ENCODE measurements at regions of chr5 and their contacts with region 1.

Region 1: DNA sequence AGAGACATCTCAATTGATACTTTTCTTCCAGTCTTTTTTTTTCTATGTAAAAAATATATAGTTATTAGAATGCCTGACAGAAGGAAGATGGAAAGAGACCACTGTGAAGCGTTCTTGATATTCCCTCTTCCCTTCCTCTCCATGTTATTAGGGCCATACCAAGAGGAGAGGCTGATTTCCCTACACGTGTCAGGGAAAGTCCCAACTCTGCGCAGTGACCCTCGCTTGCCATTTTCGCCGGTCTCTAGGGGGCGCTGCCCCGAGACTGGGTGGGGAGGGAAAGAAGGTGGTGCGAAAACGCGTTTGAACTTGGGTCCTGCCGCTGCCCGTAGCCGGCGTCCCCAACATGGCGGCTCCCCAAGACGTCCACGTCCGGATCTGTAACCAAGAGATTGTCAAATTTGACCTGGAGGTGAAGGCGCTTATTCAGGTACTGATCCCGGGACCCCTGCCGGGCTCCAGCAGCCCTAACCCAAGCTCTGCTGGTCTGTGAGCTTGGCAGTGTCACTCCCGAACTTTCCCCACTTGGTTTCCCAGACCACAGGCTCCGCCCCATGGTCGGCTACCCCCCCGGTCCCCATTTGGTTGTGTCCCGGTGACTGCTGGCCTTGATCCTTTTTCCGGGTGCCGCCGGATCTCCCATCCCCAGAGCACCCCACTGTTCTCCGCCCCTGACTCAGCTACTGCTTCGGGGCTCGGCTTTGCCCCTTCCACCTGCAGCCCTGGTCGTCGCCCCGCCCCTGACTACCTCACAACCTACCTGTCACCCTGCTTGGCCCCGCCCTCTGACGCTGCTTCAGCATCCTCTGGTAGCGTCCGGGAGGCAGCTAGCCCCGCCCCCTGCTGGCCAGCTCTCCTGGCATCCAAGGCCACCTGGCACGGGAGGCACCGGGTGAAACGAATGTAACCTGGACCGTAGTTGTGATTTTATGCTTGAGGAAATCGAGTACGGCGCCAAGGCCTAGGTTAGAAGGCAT is at the start of gene BNIP1:
- DNase-seq: peak; percentile 95
- H3K4me3 ChIP-seq: peak within 1 kb of the TSS; percentile 77 to 97 (median 89)
- H3K27ac ChIP-seq: peak within 1 kb of the TSS; percentile 89
- H3K4me1 ChIP-seq: peaks cover 4% of the 10 kb centered on the region
- H3K27me3 ChIP-seq: no peaks in the 10 kb centered on the region
- CTCF ChIP-seq: peak; percentile 98
- POLR2A ChIP-seq: peak; percentile 73
- total RNA-seq, gene BNIP1: 15.7 and 19.7 TPM in 2 replicates

Region 2: GRCh38 chr5:172920447-172920849 is 224.0 kb before region 1 on chr5:
- CTCF ChIA-PET with region 1: no interaction called
- POLR2A ChIA-PET with region 1: no interaction called
- dilution Hi-C with region 1: no loop called
- intact Hi-C with region 1: no loop called
- DNase-seq: no peak
- H3K4me3 ChIP-seq: no peak overlapping the region
- H3K27ac ChIP-seq: no peak overlapping the region
- H3K4me1 ChIP-seq: no peaks in the 10 kb centered on the region
- H3K27me3 ChIP-seq: no peaks in the 10 kb centered on the region
- CTCF ChIP-seq: no peak
- POLR2A ChIP-seq: no peak

Region 3: GRCh38 chr5:173010547-173011464 is 133.7 kb before region 1 on chr5:
- CTCF ChIA-PET with region 1: interaction called, 19 read pairs
- POLR2A ChIA-PET with region 1: interaction called, 3 read pairs
- dilution Hi-C with region 1: no loop called
- intact Hi-C with region 1: loop called (anchors 1 kb)
- DNase-seq: peak; percentile 75
- H3K4me3 ChIP-seq: no peak overlapping the region
- H3K27ac ChIP-seq: no peak overlapping the region
- H3K4me1 ChIP-seq: peaks cover 2% of the 10 kb centered on the region
- H3K27me3 ChIP-seq: no peaks in the 10 kb centered on the region
- CTCF ChIP-seq: peak; percentile 41 to 52
- POLR2A ChIP-seq: no peak

Region 4: DNA sequence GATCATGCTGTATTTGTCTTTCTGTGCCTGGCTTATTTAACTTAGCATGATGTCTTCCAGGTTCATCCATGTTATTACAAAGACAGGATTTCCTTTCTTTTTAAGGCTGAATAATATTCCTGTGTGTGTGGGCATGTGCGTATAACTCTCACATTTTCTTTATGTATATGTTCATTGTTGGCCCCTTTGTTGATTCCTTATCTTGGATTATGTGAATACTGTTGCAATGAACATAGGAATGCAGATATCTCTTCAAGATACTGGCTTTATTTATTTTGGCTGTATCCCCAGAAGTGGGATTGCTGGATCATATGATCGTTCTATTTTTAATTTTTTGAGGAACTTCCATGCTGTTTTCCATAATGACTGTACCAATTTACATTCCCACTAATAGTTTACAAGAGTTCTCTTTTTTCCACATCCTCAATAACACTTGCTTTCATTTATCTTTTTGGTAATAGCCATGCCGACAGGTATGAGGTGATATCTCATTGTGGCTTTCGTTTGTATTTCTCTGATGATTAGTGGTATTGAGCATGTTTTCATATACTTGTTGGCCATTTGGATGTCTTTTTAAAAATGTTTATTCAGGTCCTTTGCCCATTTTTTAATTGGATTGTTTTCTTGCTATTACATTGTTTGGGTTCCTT is 50.4 kb before region 1 on chr5:
- CTCF ChIA-PET with region 1: interaction called, 3 read pairs
- POLR2A ChIA-PET with region 1: no interaction called
- dilution Hi-C with region 1: no loop called
- intact Hi-C with region 1: loop called (anchors 1 kb)
- DNase-seq: peak; percentile 97
- H3K4me3 ChIP-seq: no peak overlapping the region
- H3K27ac ChIP-seq: peak overlapping the region; percentile 65
- H3K4me1 ChIP-seq: peaks cover 21% of the 10 kb centered on the region
- H3K27me3 ChIP-seq: no peaks in the 10 kb centered on the region
- CTCF ChIP-seq: no peak
- POLR2A ChIP-seq: no peak

Region 5: DNA sequence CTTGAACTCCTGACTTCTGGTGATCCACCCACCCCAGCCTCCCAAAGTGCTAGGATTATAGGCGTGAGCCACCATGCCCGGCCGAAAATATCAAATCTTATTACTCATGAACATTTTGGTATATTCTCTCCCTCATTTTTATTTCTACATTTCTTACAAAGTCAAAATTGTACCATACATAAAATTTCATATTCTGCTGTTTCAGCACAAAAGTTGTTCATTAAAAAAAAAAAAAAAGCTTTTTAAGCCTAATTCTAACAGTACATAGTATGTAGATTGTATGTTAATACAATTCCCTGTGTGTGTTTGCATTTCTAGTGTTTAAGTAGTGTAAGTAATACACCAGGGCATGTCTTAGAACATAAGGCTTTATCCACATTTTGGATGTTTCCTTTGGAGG is 14.8 kb after region 1 on chr5:
- CTCF ChIA-PET with region 1: no interaction called
- POLR2A ChIA-PET with region 1: no interaction called
- dilution Hi-C with region 1: no loop called
- intact Hi-C with region 1: no loop called
- DNase-seq: no peak
- H3K4me3 ChIP-seq: no peak overlapping the region
- H3K27ac ChIP-seq: no peak overlapping the region
- H3K4me1 ChIP-seq: no peaks in the 10 kb centered on the region
- H3K27me3 ChIP-seq: no peaks in the 10 kb centered on the region
- CTCF ChIP-seq: no peak
- POLR2A ChIP-seq: no peak